PC-9 (cell line): ENCODE measurements at regions of chr2 and their contacts with region 1.

Region 1: DNA sequence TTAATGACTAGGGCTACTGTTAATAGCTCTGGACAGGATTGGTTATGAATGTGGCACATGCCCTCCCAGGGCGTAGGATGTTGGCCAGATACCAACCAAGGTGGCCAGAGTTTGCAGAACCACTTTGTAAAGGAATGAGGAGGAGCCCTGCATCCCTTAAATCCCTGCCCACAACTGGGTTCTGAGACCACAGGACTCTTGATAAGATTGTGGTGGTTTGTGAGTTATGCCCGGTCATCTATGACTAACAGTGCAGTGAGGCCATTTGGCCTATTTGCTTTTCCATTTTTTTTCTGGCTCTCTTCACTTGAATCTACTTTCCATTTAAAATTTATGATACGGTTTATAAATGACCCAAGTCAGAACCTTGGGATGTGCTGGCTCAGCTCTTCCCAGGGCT is 294.5 kb downstream of the PRKCE start:
- DNase-seq: peak; percentile 89 to 98
- H3K4me3 ChIP-seq: no peak overlapping the region
- H3K27ac ChIP-seq: peak overlapping the region; percentile 39
- H3K4me1 ChIP-seq: peaks cover 44% of the 10 kb centered on the region
- H3K27me3 ChIP-seq: no peaks in the 10 kb centered on the region
- CTCF ChIP-seq: no peak

Region 2: DNA sequence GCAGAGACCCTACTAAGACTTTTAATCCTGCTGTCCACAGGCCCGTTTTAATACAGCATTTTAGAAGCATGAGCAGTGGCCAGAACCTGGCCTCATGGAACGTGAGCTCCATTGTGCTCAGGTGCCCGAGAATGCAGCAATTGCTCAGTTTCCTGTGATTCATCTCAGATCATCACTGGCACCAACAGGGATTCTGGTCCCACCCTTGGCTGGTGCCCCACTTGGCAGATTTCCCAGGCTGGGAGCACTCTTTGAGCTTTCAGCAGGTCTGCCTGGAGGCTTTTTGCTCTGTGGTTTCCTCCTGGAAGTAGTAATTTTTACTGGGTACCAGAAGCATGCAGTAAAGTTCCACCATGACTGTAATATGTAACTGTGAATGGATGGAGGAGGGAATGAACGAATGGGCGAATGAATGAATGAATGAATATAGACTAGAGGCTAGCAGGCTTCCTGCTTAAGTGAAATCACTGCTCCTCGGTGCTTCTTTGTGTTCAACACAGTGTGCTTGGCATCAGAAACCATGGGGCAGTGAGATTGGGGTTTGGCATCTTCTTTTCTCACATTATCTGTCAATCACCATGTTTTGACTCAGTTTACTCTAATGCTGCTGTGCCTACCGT is 18.3 kb after region 1 on chr2:
- CTCF ChIA-PET with region 1: interaction called, 4 read pairs
- POLR2A ChIA-PET with region 1: interaction called, 9 read pairs
- intact Hi-C with region 1: loop called (anchors 2 kb)
- DNase-seq: peak; percentile 99 to 100
- H3K4me3 ChIP-seq: no peak overlapping the region
- H3K27ac ChIP-seq: peak overlapping the region; percentile 84
- H3K4me1 ChIP-seq: peaks cover 58% of the 10 kb centered on the region
- H3K27me3 ChIP-seq: no peaks in the 10 kb centered on the region
- CTCF ChIP-seq: no peak

Region 3: DNA sequence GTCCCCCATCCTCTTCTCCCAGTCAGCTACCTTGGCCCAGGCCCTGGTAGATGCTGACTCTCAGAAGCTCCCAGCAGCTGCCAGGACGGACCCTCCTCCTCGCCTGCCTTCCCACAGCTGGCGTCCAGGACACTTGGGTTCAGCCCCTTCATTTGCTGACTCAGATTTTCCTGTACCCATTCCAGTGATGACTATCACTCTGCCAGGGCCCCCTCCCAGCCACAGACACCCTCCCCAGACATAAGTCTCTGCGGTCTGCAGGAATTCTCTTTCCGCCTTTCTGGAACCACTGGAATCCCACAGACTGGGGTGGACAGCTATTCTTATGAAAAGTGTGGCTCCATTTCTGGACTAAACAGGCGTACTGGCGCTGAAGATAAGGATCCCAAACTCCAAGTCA is 90.9 kb after region 1 on chr2:
- CTCF ChIA-PET with region 1: no interaction called
- POLR2A ChIA-PET with region 1: no interaction called
- intact Hi-C with region 1: no loop called
- DNase-seq: no peak
- H3K4me3 ChIP-seq: no peak overlapping the region
- H3K27ac ChIP-seq: no peak overlapping the region
- H3K4me1 ChIP-seq: peaks cover 12% of the 10 kb centered on the region
- H3K27me3 ChIP-seq: no peaks in the 10 kb centered on the region
- CTCF ChIP-seq: no peak

Region 4: DNA sequence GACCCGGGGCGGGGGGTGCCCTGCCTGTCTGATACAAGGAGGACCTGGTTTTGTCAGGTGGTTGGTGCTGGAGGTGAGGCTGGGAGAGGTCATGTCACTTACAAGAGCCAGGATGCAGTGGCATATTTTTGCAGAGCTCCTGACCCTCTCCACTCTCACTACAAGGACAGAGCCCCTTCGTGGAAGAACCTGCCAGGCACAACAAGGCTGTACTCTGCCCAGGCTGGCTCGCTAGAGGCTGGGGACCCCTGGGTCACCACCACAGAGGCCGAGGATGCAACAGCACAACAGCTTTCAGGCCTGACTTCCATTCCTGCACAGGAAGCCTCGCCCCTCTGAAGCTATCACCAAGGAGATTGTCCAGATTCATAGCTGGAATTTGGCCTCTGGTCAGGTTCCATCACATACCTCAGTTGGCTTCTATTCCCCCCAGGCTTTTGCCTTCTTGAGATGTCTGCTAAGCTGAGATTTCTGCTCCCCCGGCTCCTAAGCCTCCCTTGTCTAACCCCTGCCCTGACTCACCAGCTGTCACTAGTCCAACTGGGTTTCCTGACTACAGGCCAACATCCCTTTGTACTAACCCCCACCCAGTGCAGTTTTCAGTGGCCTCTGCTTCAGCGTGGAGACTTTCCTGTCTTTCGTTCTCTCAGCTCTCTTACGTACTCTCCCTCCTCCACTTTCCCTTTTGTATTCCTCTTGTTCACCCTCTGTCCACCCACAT is 218.7 kb after region 1 on chr2:
- CTCF ChIA-PET with region 1: no interaction called
- POLR2A ChIA-PET with region 1: no interaction called
- intact Hi-C with region 1: no loop called
- DNase-seq: peak; percentile 93 to 99
- H3K4me3 ChIP-seq: peak overlapping the region; percentile 36; the same call in 1 of the 2 replicates
- H3K27ac ChIP-seq: peak overlapping the region; percentile 96
- H3K4me1 ChIP-seq: peaks cover 74% of the 10 kb centered on the region
- H3K27me3 ChIP-seq: no peaks in the 10 kb centered on the region
- CTCF ChIP-seq: 0 out of 2 replicates have a peak, but pooled peaks have one; percentile 13